Activated CD8-positive, alpha-beta T cell treated with anti-CD3 and anti-CD28 coated beads, Interleukin-2, amount 10 ng/mL, durations not matched to agents 7 days and 5 days (primary cell): ENCODE measurements at regions of chr4 and their contacts with region 1.

Region 1: DNA sequence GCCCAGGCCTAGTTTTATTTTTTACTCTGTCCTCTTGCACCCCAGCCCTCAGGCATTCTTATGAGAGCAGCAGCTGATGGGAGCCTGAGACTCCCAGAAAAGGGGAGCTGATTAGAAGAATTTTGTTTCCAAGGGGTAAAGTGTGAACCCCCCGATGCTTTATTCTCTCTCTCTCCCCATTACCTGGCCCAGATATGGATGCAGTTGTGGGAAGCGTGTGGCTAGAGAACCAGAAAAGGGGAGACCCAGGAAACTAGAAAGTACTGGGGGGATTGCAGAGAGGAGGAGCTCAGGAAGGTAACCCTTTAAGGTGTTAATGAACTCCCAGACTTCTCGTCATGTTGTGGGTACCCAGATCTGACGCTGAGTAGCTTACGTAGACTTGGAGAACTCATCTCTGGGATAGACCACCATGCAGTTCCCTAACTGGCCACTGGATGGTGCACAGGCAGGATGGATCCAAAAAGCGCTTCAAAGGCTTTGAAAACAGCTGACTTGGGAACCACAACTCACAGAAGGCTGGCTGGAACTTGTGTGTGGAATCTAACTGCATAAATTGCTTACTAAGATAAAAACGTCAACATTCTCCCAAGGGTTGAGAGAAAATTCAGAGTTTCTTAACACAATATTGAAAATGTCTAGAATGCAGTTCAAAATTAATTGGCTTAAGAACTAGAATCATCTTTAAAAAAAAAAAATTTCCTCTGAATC is 64.7 kb downstream of the TBC1D14 start:
- DNase-seq: peak; percentile 87
- ATAC-seq: peak; percentile 90
- H3K4me3 Mint-ChIP-seq: no peak overlapping the region
- H3K27ac Mint-ChIP-seq: no peak overlapping the region
- H3K4me1 Mint-ChIP-seq: peaks cover 10% of the 10 kb centered on the region
- H3K27me3 Mint-ChIP-seq: no peaks in the 10 kb centered on the region

Region 2: DNA sequence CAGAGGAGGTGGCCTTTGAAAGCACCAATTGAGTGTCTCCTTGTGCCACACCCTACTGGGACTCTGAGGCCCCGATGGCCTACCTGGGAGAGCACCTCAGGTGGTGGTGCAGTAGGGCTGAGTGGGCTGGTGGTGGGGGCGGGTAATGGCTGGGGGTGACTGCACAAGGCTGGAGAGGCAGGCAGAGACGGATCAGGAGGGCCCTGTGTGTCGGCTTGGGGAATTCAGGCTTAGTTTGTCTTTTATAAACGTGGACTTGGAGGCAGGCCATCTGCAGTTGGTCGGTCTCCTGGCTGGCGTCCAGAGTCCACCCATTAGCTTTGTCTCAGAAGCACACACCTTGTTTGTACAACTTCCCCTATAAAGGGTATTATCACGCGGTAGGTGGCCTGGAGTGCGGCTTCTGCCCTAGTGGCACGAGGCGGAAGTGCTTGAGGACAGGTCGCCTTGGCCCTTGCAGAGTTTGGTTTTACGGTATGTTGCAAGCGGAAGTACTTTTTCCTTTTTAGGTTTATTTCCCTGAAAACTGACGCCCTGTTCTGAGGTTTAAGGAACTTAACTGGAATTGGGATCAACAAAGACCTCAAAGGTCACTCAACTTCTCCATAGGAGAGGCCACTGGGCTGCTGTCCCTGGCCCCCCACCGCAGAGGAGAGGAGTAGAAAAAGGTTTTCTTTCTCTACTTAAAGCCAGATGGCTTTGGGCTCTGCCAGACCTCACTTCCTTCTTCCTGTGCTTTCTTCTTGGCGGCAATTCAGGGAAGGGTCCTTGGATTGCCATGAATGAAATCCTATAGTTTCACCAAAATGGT is 56.6 kb before region 1 on chr4:
- CTCF ChIA-PET with region 1: interaction called, 10 read pairs
- POLR2A ChIA-PET with region 1: no interaction called
- DNase-seq: peak; percentile 66
- ATAC-seq: peak; percentile 61
- H3K4me3 Mint-ChIP-seq: peak overlapping the region; percentile 62
- H3K27ac Mint-ChIP-seq: peak overlapping the region; percentile 92
- H3K4me1 Mint-ChIP-seq: peaks cover 58% of the 10 kb centered on the region
- H3K27me3 Mint-ChIP-seq: no peaks in the 10 kb centered on the region

Region 3: GRCh38 chr4:6955261-6955911 is 18.9 kb before region 1 on chr4:
- CTCF ChIA-PET with region 1: interaction called, 11 read pairs
- POLR2A ChIA-PET with region 1: no interaction called
- DNase-seq: no peak
- ATAC-seq: no peak
- H3K4me3 Mint-ChIP-seq: no peak overlapping the region
- H3K27ac Mint-ChIP-seq: no peak overlapping the region
- H3K4me1 Mint-ChIP-seq: peaks cover 19% of the 10 kb centered on the region
- H3K27me3 Mint-ChIP-seq: no peaks in the 10 kb centered on the region

Region 4: GRCh38 chr4:6986781-6987587 is 12.7 kb after region 1 on chr4:
- CTCF ChIA-PET with region 1: interaction called, 24 read pairs
- POLR2A ChIA-PET with region 1: no interaction called
- DNase-seq: peak; percentile 95
- ATAC-seq: peak; percentile 94
- H3K4me3 Mint-ChIP-seq: peak overlapping the region; percentile 97
- H3K27ac Mint-ChIP-seq: peak overlapping the region; percentile 93
- H3K4me1 Mint-ChIP-seq: peaks cover 67% of the 10 kb centered on the region
- H3K27me3 Mint-ChIP-seq: no peaks in the 10 kb centered on the region

Region 5: DNA sequence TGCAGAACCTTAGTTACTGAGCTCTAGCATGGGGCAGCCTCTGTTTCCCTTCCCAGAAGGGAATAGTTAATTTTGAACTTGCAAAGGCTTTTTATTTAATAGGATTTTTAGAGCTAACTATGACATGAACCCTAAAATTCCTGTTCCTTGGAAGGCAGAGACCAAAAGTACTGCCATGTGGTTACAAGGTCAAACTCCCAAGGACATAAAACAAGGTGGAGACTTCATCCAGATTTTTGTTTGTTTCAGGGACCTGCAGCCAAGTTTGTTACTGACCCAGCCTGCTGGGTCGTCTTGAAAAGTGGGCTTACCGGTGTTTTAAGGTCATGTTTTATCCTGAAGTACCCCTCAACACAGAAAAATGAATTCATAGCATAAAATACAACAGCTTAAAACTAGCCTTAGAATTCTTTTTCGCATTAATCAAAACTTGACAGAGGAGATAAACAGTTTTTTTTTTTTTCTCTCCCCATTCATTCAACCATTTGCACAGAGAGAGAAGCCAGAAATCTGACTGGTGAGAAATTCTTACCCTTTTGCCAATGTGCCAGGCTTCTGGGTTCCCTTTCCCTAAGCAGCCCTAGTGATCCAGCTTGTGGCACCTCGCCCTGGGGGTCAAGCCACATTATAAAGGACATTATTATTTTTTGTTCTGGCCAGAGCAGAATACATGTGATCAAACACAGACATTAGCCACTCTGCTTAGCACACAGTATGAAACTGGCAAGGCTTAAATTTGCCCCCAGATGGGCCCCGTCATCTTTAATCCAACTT is 115.1 kb after region 1 on chr4:
- CTCF ChIA-PET with region 1: no interaction called
- POLR2A ChIA-PET with region 1: no interaction called
- DNase-seq: no peak
- ATAC-seq: no peak
- H3K4me3 Mint-ChIP-seq: no peak overlapping the region
- H3K27ac Mint-ChIP-seq: no peak overlapping the region
- H3K4me1 Mint-ChIP-seq: peaks cover under 1% of the 10 kb centered on the region
- H3K27me3 Mint-ChIP-seq: peaks cover 18% of the 10 kb centered on the region